ENCODE measurements at regions of chr16 and their contacts with region 1.

Region 1: DNA sequence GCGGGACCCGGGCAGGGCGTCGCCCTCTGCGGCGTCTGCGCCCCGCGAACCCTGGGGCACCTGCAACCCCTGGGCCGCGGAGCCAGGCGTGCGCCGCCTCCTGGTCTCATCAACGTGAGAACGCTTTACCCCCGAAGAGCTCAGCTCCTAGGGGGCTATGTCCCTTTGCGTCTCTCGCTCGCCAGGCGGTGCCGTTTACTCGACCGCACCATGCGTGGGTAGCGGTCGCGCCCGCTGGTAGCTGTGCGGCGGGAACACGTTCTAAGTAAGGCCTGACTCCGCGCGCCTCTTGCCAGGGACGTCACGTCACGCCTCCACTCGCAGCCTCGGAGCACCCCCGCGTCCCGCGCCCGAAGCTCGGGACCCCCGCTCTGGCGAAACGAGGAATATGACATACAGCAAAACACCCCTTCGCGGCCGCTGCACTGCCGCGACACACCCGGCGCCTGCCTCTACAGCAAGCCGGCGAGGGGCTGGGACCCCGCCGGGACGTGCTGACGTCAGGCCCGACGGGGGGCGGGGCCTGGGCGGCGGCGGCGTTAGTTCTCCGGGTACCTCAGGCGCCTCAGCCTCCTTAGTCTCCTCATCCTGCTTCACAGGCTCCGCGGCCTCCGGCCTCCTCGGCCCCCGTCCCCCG is at the start of gene RAB11FIP3:
- DNase-seq: peak; percentile 93
- total RNA-seq, gene RAB11FIP3: 52.2 TPM

Region 2: DNA sequence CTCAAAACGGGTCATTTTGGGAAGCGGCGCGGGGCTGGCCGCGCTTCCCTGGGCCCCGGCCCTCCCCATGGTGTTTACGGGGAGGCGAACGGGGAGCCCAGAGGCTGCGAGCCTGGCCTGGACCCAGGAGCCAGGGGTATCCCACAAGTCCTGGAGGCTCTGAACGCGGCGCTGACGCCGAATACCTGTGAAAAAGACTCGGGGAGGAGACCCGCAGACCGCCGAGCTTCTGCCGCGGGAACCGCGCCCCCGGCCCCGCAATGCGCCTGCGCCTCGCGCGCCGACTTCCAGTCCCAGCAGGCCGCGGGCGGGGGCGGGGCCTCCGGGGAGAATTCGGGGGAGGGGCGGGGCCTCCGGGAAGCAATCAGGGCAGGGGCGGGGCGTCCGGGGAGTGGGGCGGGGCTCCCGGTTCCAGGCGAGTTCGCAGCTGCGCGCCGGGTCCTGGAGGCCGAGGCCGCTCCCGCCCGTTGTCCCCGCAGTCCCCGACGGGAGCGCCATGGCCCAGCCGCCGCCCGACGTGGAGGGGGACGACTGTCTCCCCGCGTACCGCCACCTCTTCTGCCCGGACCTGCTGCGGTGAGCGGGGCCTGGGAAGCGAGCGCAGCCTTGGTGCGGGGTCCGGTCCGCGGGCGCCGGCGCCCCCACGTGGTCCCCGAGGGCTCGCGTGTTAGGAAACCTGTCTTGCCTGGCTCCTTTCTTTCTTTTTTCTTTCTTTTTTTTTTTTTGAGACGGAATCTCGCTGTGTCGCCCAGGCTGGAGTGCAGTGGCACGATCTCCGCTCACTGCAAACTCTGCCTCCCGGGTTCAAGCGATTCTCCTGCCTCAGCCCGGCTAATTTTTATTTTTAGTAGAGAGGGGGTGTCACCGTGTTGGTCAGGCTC is 23.5 kb before region 1 on chr16 and contains the start of gene DECR2:
- intact Hi-C with region 1: loop called (anchors 2 kb)
- DNase-seq: peak; percentile 99
- total RNA-seq, gene DECR2: 11.6 TPM

Region 3: DNA sequence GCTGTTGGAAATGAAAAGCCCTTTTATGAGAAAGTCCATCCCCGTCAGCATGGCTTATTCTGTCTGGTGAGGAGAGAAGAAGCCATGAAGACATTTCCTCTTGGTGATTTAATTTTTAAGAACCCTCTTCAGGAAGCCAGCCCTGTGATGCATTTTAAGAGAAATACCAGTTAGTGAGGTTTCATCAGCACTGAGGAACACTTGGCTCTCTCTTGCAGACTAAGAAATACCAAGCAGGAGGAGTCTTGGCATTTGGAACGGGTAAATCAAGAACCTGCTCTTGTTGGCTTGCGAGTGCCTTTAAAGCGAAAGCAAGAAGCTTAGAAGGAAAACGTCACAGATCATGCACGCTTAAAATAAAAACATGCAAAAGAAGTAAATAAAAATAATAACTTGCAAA is 17.8 kb after region 1 on chr16:
- intact Hi-C with region 1: no loop called
- DNase-seq: no peak

Region 4: DNA sequence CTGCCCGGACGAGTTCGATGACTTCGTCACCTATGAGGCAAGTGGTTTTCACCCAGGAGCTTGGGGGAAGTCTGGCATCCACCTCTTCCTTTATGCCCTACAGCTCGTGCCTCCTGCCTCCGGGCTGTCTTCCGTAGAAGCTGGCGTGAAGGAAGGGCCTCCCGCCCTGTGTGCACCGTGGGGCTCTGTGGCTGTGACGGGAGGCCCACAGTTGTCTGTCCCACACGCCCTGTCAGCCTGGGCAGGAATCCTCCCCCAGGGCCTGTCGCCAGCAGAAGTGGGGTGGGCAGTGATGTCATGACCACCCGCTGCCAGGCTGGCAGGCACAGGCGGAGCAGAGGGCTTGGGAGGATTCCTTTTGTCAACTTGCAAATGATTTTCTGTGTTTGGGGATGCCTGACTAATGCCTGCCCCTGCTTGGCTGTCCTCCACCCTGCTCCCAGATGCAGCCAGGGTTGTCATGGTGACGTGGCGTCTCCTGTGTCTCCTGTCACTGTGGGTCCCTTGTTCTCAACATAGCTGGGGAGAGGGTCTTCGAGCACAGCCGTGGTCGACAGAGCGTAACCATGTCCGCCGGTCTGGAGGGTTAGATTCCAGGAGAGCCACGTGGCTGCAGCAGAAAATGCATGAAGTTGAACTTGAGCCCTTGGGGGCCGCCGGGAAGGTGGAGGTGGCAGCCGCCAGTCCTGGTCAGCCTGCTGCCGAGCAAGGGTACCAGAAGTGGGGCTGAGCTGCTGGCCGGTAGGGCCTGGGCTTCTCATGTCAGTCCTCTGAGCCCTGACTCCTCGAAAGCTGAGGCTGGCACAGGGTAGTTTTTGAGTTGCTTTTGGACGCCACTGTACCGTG is 46.4 kb after region 1 on chr16:
- intact Hi-C with region 1: loop called (anchors 10 kb)
- DNase-seq: no peak

Measured in cardiac septum (tissue), 1 donor.